GM23248 (cell line): ENCODE measurements at regions of chr12 and their contacts with region 1.

Region 1: DNA sequence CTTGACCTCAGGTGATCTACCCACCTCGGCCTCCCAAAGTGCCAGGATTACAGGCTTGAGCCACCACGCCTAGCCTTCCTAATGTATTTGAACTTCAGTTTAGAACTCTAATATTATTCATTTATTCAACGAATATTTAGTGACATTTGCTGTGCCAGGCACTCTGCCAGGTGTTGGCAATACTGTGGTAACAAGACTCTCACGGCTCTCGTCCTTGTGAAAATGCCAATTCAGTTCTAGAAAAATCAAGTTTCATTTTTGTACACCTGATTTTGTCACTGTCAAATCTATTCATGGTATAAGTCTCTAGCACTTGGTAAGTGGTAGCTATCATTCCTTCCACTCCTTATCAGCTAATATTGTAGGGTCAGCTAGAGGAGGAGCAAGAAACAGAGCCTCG is 6.3 kb upstream of the PWP1 start:
- DNase-seq: no peak
- H3K4me3 ChIP-seq: no peak overlapping the region
- H3K27ac ChIP-seq: no peak overlapping the region
- H3K4me1 ChIP-seq: peaks cover 3% of the 10 kb centered on the region; the same call in 1 of the 2 replicates
- H3K27me3 ChIP-seq: peaks cover 34% of the 10 kb centered on the region

Region 2: DNA sequence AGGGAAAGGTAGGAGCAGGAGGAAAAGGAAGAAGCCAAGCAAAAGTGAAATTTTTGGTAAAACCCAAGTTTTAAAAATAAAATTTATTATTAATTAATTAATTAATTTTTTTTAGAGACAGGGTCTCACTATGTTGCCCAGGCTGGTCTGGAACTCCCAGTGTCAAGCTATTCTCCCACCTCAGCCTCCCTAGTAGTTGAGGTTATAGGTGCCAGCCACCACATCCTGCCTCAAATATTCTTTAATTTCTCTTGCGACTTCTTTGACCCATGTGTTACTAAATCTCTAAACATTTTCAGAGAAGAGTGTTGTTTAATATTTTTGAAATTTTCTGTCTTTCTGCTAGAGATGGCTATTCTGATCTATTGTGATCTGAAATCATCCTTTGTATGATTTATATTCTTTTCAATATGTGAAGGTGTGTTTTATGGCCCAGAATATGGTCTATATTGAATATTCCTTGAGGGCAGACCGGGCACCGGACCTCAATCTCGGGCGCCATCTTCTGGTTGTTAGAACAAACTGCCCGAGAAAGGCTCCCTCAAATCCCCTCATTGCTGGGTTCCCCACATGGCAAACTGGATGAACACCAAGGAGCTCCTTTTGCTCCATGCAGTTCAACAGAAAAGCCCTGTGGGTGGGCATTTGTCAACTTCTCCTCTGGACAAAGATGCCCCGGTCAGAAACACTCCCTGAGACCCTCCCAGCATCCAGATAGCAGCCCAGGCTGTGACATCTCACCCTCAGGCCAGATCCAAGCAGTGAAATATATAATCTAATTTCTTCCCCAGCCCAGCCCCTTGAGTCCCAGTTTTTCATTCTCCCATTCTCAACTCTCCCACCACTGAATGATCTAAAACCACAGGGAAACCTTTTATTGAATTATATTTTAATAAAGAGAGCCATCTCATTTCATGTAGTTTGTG is 205.7 kb after region 1 on chr12:
- in situ Hi-C with region 1: loop called (anchors 5 kb)
- DNase-seq: peak; percentile 79
- H3K4me3 ChIP-seq: no peak overlapping the region
- H3K27ac ChIP-seq: no peak overlapping the region
- H3K4me1 ChIP-seq: no peaks in the 10 kb centered on the region
- H3K27me3 ChIP-seq: peaks cover 10% of the 10 kb centered on the region